MCF 10A (cell line): ENCODE measurements at regions of chr4 and their contacts with region 1.

Region 1: DNA sequence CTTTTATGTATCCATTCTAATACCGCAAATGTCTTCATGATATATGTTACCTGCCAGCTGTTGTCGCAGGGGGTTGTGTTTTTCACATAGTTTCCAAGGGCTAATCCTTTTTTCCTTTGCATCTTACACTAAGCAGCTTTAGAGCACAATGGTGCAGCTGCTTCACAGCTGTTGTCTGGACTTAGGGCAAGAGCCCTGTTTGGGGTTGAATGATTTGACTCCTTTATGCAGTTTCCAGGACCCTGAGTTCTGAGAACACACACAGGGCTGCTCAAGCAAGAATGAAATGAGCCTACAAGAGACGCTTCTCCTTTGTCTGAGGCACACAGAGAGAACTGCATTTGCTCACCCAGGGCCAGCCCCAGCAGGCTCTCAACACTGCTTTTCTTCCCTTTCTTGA is 20.2 kb downstream of the CCNG2 start:
- DNase-seq: no peak
- H3K4me3 Mint-ChIP-seq: no peak overlapping the region
- H3K27ac Mint-ChIP-seq: no peak overlapping the region
- H3K4me1 Mint-ChIP-seq: peaks cover 11% of the 10 kb centered on the region
- H3K27me3 Mint-ChIP-seq: no peaks in the 10 kb centered on the region
- CTCF ChIP-seq: no peak

Region 2: GRCh38 chr4:77125976-77126375 is 51.2 kb before region 1 on chr4:
- CTCF ChIA-PET with region 1: no interaction called
- POLR2A ChIA-PET with region 1: no interaction called
- intact Hi-C with region 1: no loop called
- DNase-seq: no peak
- H3K4me3 Mint-ChIP-seq: no peak overlapping the region
- H3K27ac Mint-ChIP-seq: no peak overlapping the region
- H3K4me1 Mint-ChIP-seq: no peaks in the 10 kb centered on the region
- H3K27me3 Mint-ChIP-seq: no peaks in the 10 kb centered on the region
- CTCF ChIP-seq: no peak

Region 3: GRCh38 chr4:77193511-77194102 is 16.4 kb after region 1 on chr4:
- CTCF ChIA-PET with region 1: interaction called, 4 read pairs
- POLR2A ChIA-PET with region 1: interaction called, 16 read pairs
- intact Hi-C with region 1: no loop called
- DNase-seq: no peak
- H3K4me3 Mint-ChIP-seq: no peak overlapping the region
- H3K27ac Mint-ChIP-seq: no peak overlapping the region
- H3K4me1 Mint-ChIP-seq: no peaks in the 10 kb centered on the region
- H3K27me3 Mint-ChIP-seq: no peaks in the 10 kb centered on the region
- CTCF ChIP-seq: no peak

Region 4: GRCh38 chr4:77385124-77385969 is 208.1 kb after region 1 on chr4:
- CTCF ChIA-PET with region 1: no interaction called
- POLR2A ChIA-PET with region 1: no interaction called
- intact Hi-C with region 1: no loop called
- DNase-seq: peak; percentile 77
- H3K4me3 Mint-ChIP-seq: no peak overlapping the region
- H3K27ac Mint-ChIP-seq: no peak overlapping the region
- H3K4me1 Mint-ChIP-seq: no peaks in the 10 kb centered on the region
- H3K27me3 Mint-ChIP-seq: peaks cover 11% of the 10 kb centered on the region
- CTCF ChIP-seq: peak; percentile 74

Region 5: DNA sequence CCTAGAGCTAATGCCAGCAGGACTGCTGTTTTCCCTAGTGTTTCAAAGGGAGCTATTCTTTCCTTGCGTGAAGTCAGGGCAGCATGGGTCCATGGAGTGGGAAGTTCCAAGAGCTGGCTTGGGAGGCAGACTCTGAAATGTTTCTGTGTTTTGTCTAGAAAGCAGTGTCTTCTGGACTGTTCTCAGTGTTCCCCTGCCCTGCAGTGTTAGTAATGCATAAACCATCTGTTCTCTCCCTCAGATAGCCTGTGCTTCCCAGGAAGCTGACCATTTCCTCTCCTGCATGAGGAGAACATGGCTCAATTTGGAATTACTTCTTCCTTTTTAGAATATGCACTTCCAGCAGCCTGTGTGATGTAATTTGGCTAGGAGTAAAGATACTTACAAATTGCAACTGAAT is 311.7 kb after region 1 on chr4:
- CTCF ChIA-PET with region 1: no interaction called
- POLR2A ChIA-PET with region 1: no interaction called
- intact Hi-C with region 1: no loop called
- DNase-seq: no peak
- H3K4me3 Mint-ChIP-seq: no peak overlapping the region
- H3K27ac Mint-ChIP-seq: no peak overlapping the region
- H3K4me1 Mint-ChIP-seq: peaks cover 14% of the 10 kb centered on the region
- H3K27me3 Mint-ChIP-seq: no peaks in the 10 kb centered on the region
- CTCF ChIP-seq: no peak